Transverse colon (tissue), 4 donors: ENCODE measurements at regions of chr22 and their contacts with region 1.

Region 1: GRCh38 chr22:36528795-36529751 is at the start of gene EIF3D:
- DNase-seq: peak; percentile 99
- H3K4me3 ChIP-seq: peak within 1 kb of the TSS; percentile 59 to 90 (median 74)
- H3K27ac ChIP-seq: peak within 1 kb of the TSS; percentile 87 to 96 (median 95)
- H3K4me1 ChIP-seq: peaks cover 4 to 21% (median 14%) of the 10 kb centered on the region in 4 donors
- H3K27me3 ChIP-seq: no peaks in the 10 kb centered on the region
- CTCF ChIP-seq: peak in 2 of 5 experiments; percentile 0 to 34
- EP300 ChIP-seq: peak; percentile 3
- POLR2A ChIP-seq: peak; percentile 77
- total RNA-seq, gene EIF3D: 69.6 to 217 (median 146) TPM

Region 2: DNA sequence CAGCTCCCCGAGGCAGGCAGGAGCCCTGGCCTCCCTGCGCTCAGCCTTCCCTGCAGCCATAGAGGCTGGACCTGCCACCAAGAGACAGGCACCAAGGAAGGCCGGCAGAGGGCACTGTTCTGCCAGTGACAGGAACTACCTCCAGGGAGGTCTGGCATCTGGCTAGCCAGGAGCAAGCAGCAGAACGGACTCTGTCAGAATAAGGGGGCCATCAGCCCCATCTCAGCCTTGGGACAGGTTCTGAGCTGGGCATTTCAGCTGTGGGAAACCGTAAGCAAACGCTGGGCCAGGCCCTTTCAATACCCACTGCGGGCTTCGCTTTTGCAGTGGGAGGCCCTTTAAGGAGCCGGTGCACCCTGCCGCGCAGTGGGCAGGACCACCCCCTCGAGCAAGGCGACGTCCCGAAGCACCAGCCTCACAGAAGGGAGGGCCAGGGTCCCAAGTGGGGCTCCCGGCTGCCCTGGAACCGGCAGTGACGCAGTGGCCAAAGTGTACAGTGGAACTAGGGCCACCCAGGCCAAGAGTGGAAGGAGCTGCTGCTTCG is 228.7 kb after region 1 on chr22:
- in situ Hi-C with region 1: loop called in 1 of 4 experiments (anchors 25 kb)
- intact Hi-C with region 1: no loop called
- DNase-seq: peak; percentile 85
- H3K4me3 ChIP-seq: no peak overlapping the region
- H3K27ac ChIP-seq: no peak overlapping the region
- H3K4me1 ChIP-seq: peaks cover 0 to 4% (median 1%) of the 10 kb centered on the region in 4 donors
- H3K27me3 ChIP-seq: peaks cover 22% of the 10 kb centered on the region
- CTCF ChIP-seq: peak; percentile 71 to 83 (median 79)
- EP300 ChIP-seq: no peak
- POLR2A ChIP-seq: no peak

Region 3: DNA sequence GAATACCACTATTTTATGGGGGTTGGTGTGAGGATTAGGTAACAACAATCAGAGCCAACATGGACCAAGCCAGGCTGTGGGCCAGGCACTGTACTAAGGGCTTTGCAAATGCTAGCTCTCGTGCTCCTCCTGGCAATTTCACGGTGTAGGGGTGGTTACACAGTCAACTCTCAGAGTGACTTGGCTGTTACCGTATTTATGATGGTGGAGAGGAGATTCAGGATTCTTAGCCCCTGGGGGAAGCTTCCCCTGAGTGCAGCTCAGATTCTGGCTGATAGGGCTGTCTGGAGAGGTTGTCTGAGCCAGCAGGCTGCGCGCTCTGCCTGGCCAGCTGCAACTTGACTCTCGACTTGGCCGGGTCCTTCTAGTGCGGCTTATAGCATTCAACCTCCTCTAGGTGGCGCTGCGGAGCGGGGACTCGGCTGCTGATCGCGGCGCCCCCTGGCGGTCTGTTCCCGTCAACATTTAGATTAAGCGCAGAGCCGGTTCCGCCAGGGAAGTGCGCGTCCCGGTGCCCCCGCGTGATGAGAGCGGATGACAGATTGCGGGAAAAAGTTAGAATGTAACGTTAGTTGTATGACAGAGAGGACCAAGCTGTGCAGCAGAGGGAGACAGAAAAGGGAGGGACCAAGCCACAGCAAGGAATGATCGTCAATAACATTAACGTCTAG is 327.2 kb after region 1 on chr22:
- in situ Hi-C with region 1: loop called in 2 of 4 experiments (anchors 25 kb)
- intact Hi-C with region 1: no loop called
- DNase-seq: peak; percentile 95
- H3K4me3 ChIP-seq: no peak overlapping the region
- H3K27ac ChIP-seq: no peak overlapping the region
- H3K4me1 ChIP-seq: peaks cover 0 to 6% (median 0%) of the 10 kb centered on the region in 4 donors
- H3K27me3 ChIP-seq: no peaks in the 10 kb centered on the region
- CTCF ChIP-seq: peak; percentile 100
- EP300 ChIP-seq: no peak
- POLR2A ChIP-seq: no peak